ENCODE measurements at regions of chr1 and their contacts with region 1.

Region 1: GRCh38 chr1:247210376-247211117 is 38.7 kb upstream of the ZNF124 start:
- DNase-seq: peak; percentile 98
- ATAC-seq: peak; percentile 100
- H3K4me3 Mint-ChIP-seq: peak overlapping the region; percentile 89
- H3K27ac Mint-ChIP-seq: peak overlapping the region; percentile 91
- H3K4me1 Mint-ChIP-seq: peaks cover 60% of the 10 kb centered on the region
- H3K27me3 Mint-ChIP-seq: no peaks in the 10 kb centered on the region

Region 2: GRCh38 chr1:246724016-246724730 is 486.4 kb before region 1 on chr1 and contains the start of gene SCCPDH:
- CTCF ChIA-PET with region 1: no interaction called
- POLR2A ChIA-PET with region 1: no interaction called
- intact Hi-C with region 1: loop called in 1 of 2 experiments (anchors 2 kb)
- DNase-seq: peak; percentile 84
- ATAC-seq: peak; percentile 96
- H3K4me3 Mint-ChIP-seq: peak within 1 kb of the TSS; percentile 83
- H3K27ac Mint-ChIP-seq: peak within 1 kb of the TSS; percentile 84
- H3K4me1 Mint-ChIP-seq: peaks cover 8% of the 10 kb centered on the region
- H3K27me3 Mint-ChIP-seq: no peaks in the 10 kb centered on the region
- total RNA-seq, gene SCCPDH: 17.1 to 28.6 TPM

Region 3: DNA sequence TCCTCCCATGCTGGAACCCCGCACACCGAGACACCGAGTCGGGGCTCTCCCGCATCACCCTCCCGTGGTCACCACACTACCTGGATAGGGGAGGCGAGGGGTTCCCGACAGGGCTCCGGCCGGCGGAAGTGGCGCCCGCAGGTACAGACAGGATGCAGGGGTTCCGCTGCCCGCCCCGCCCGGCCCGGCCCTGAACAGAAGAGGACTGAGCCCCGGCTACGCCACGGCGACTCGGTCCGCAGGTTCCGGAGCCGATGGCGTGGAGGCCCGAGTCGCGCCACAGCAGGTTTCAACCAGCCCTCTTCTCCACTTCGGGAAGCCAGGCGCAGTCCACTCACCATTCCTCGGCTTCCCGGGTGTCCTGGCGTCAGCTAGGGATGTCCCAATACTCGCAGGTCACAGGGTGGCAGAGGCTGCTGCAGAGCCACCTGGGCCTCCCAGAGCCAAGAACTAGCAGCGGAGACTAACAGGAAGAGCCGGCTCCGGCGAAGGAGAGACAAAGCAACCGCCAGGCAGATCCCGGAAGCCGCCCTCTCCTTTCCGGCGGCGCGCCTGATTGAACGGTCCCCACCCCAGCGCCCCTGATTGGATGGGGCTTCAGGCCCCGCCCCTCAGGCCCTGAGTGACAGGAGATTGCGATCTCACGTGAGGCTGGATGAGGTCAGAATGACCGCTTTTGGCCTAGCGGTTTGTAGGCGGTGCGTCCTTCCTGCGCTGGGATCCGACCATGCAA is 106.5 kb before region 1 on chr1 and contains the start of gene ZNF669:
- CTCF ChIA-PET with region 1: no interaction called
- POLR2A ChIA-PET with region 1: no interaction called
- intact Hi-C with region 1: loop called (anchors 1 kb)
- DNase-seq: peak; percentile 97
- ATAC-seq: peak; percentile 100
- H3K4me3 Mint-ChIP-seq: peak within 1 kb of the TSS; percentile 86
- H3K27ac Mint-ChIP-seq: peak within 1 kb of the TSS; percentile 90
- H3K4me1 Mint-ChIP-seq: peaks cover 19% of the 10 kb centered on the region
- H3K27me3 Mint-ChIP-seq: peaks cover 16% of the 10 kb centered on the region
- total RNA-seq, gene ZNF669: 6.9 to 8.8 TPM

Region 4: GRCh38 chr1:247287460-247287859 is 76.9 kb after region 1 on chr1:
- CTCF ChIA-PET with region 1: no interaction called
- POLR2A ChIA-PET with region 1: no interaction called
- intact Hi-C with region 1: no loop called
- DNase-seq: no peak
- ATAC-seq: no peak
- H3K4me3 Mint-ChIP-seq: no peak overlapping the region
- H3K27ac Mint-ChIP-seq: no peak overlapping the region
- H3K4me1 Mint-ChIP-seq: no peaks in the 10 kb centered on the region
- H3K27me3 Mint-ChIP-seq: no peaks in the 10 kb centered on the region

Region 5: GRCh38 chr1:247322849-247323586 is 112.5 kb after region 1 on chr1:
- CTCF ChIA-PET with region 1: no interaction called
- POLR2A ChIA-PET with region 1: no interaction called
- intact Hi-C with region 1: loop called in 1 of 2 experiments (anchors 2 kb)
- DNase-seq: peak; percentile 72
- ATAC-seq: peak; percentile 72
- H3K4me3 Mint-ChIP-seq: peak overlapping the region; percentile 60
- H3K27ac Mint-ChIP-seq: peak overlapping the region; percentile 85
- H3K4me1 Mint-ChIP-seq: peaks cover 41% of the 10 kb centered on the region
- H3K27me3 Mint-ChIP-seq: no peaks in the 10 kb centered on the region

Region 6: GRCh38 chr1:247407180-247407616 is 196.7 kb after region 1 on chr1:
- CTCF ChIA-PET with region 1: no interaction called
- POLR2A ChIA-PET with region 1: no interaction called
- intact Hi-C with region 1: loop called in 1 of 2 experiments (anchors 1 kb)
- DNase-seq: peak; percentile 84
- ATAC-seq: peak; percentile 85
- H3K4me3 Mint-ChIP-seq: peak overlapping the region; percentile 24
- H3K27ac Mint-ChIP-seq: peak overlapping the region; percentile 72
- H3K4me1 Mint-ChIP-seq: peaks cover 41% of the 10 kb centered on the region
- H3K27me3 Mint-ChIP-seq: peaks cover 2% of the 10 kb centered on the region

Measured in activated CD4-positive, alpha-beta T cell treated with anti-CD3 and anti-CD28 coated beads for 36 hours (primary cell).